ENCODE measurements at regions of chr10 and their contacts with region 1.

Region 1: DNA sequence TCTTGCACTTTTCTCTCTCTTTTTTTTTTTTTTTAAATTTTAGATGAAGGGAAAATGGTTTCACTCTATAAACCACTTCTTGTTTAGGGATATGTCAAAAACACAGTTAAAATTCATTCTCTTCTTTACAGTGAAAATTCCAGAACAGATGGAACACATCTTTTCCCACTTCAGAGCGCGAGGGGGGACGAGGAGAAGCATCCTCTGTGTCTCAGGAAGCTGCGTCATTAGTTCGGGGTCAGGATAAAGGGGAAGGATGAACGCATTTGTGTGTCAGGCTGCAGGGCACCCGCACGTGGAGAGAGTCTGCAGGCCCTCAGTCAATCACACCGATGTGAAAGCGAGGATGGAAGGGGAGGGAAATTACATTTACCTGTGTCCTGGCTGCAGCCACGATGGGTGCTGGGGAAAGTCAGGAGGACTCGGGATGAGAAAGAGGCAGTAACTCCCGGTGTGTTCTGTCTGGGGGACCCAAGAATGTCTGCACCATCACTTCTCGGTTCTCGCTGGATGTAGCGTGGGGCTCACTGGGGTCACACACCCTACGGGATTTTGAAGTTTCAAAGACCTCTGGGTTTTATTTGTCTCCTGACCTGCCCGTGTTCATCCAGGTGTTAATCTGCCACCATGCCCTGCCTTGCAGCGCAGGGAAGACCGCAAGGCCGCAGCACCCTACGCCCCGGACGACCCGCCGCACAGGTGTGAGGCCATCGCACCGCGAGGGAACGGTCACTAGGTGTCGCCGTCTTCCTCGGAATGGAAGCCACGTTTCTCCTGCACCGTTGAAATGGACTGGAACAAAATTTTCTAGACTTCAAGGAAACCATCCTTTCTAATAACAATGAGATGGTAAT is 66.7 kb upstream of the PITRM1 start:
- DNase-seq: peak; percentile 78
- ATAC-seq: peak; percentile 86 to 89

Region 2: GRCh38 chr10:3197348-3198003 is 41.8 kb before region 1 on chr10:
- intact Hi-C with region 1: no loop called
- DNase-seq: peak; percentile 79
- ATAC-seq: peak; percentile 94 to 96

Region 3: GRCh38 chr10:4663162-4663904 is 1424.0 kb after region 1 on chr10:
- intact Hi-C with region 1: loop called in 1 of 2 experiments (anchors 5 kb)
- DNase-seq: peak; percentile 59
- ATAC-seq: peak; percentile 89 to 98

Measured in left cardiac atrium (tissue), 4 donors.